ENCODE measurements at regions of chr7 and their contacts with region 1.

Region 1: DNA sequence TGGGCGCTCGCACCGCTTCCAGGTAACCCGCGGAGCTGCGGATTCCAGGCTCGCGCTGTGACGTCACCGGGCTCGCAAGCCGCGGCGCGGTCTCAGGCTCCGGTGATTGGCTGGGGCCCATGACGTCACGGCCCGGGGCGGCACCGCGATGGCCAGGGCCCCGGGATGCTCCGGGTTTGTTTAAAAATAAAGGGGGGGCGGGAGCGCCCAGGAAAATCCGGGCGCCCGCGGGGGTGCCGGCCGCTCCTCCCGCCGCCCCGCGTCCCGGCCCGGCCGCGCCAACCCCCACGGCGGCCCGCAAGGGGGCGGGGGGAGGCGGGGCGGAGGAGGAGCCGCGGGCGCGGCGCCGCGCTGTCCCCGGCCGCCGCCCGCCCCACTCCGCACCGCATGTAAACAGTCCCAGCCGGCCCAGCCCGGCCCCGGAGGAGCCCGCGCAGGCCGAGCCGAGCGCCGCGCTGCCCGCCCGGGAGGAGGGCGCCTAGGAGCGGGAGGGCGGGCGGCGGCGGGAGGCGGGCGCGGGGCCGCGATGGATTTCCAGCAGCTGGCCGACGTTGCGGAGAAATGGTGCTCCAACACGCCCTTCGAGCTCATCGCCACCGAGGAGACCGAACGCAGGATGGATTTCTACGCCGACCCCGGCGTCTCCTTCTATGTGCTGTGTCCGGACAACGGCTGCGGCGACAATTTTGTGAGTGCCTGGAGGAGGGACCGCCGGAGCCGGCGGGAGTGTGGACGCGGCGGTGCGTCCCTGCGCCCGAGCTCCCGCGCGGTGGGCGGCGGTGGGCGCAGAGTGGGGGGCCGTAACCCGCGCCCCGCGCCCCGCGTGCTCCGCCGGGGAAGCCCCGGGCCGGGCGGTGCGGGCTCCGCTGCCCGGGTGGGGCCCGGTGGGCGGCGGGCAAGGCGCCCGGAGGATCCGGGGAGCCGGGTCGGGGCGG is at the start of gene MTURN:
- DNase-seq: peak; percentile 98
- H3K4me3 ChIP-seq: peak within 1 kb of the TSS; percentile 95 to 99 (median 96)
- H3K27ac ChIP-seq: peak within 1 kb of the TSS; percentile 96 to 98 (median 98)
- H3K4me1 ChIP-seq: peaks cover 16 to 48% (median 46%) of the 10 kb centered on the region in 4 donors
- H3K27me3 ChIP-seq: no peaks in the 10 kb centered on the region
- CTCF ChIP-seq: no peak
- EP300 ChIP-seq: no peak
- POLR2A ChIP-seq: no peak
- total RNA-seq, gene MTURN: 158 to 249 (median 196) TPM

Region 2: GRCh38 chr7:30026229-30027064 is 108.4 kb before region 1 on chr7 and contains the start of gene FKBP14:
- intact Hi-C with region 1: loop called (anchors 5 kb)
- DNase-seq: peak; percentile 99
- H3K4me3 ChIP-seq: peak within 1 kb of the TSS; percentile 75 to 95 (median 81)
- H3K27ac ChIP-seq: peak within 1 kb of the TSS; percentile 88 to 94 (median 92)
- H3K4me1 ChIP-seq: peaks cover 36 to 60% (median 48%) of the 10 kb centered on the region in 4 donors
- H3K27me3 ChIP-seq: no peaks in the 10 kb centered on the region
- CTCF ChIP-seq: peak in 1 of 3 experiments; percentile 33
- EP300 ChIP-seq: no peak
- POLR2A ChIP-seq: no peak
- total RNA-seq, gene FKBP14: 6.3 to 8.3 (median 7.0) TPM

Region 3: GRCh38 chr7:30080818-30081217 is 54.1 kb before region 1 on chr7:
- intact Hi-C with region 1: loop called (anchors 5 kb)
- DNase-seq: no peak
- H3K4me3 ChIP-seq: no peak overlapping the region
- H3K27ac ChIP-seq: no peak overlapping the region
- H3K4me1 ChIP-seq: no peaks in the 10 kb centered on the region
- H3K27me3 ChIP-seq: no peaks in the 10 kb centered on the region
- CTCF ChIP-seq: no peak
- EP300 ChIP-seq: no peak
- POLR2A ChIP-seq: no peak

Region 4: GRCh38 chr7:30369879-30370278 is 235.0 kb after region 1 on chr7:
- intact Hi-C with region 1: no loop called
- DNase-seq: no peak
- H3K4me3 ChIP-seq: no peak overlapping the region
- H3K27ac ChIP-seq: no peak overlapping the region
- H3K4me1 ChIP-seq: peaks cover 0 to 16% (median 6%) of the 10 kb centered on the region in 4 donors
- H3K27me3 ChIP-seq: no peaks in the 10 kb centered on the region
- CTCF ChIP-seq: no peak
- EP300 ChIP-seq: no peak
- POLR2A ChIP-seq: no peak

Measured in esophagus muscularis mucosa (tissue), 4 donors.